ENCODE measurements at regions of chr17 and their contacts with region 1.

Region 1: DNA sequence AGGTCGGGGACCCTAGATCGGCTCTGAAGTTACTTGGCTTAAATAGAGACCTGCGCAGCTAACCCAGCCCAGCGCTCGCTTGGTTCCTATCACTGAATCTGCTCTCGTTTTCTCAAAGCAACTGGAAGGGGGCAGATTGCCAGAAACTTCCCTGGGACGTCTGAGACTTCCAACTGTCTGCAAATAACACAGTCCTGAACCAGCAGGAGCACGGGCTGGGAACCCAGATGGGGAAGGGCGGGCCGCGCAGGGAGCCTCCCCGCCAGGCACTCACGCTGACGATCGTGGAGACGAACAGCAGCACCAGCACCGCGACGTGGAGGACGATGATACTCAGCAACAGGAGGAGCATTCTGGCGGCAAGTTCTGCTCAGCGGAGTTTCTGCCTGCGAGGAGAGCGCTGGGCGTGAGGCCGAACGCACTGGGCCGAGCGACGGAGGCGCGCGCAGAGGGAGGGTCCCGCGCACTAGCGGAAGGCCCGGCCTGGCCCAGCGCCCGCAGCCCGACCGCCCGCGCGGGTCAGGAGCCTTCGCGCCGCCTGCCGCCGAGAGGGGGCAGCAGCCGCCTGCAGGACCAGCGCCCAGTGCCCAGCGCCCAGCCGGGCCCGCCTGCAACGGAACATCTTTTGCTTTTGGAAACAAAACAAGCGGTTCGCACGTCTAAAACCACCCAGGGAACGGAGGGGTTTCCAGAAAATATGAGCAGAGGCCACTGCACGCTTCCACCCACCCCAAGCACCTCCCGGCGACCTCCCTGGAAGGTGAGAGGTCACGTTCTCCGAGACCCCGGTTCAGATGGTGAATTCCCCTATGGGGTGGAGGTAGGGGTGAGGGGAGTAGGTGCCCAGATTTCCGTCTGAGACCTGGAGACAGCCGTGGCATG is 4.5 kb downstream of the PMP22 start:
- DNase-seq: peak; percentile 91 to 93
- H3K4me3 ChIP-seq: peak overlapping the region; percentile 86 to 89
- H3K27ac ChIP-seq: peak overlapping the region; percentile 98 to 99
- H3K4me1 ChIP-seq: peaks cover 19 to 21% of the 10 kb centered on the region in 2 donors
- H3K27me3 ChIP-seq: no peaks in the 10 kb centered on the region
- CTCF ChIP-seq: peak; percentile 64 to 98 (median 91)
- POLR2A ChIP-seq: peak; percentile 6 to 47

Region 2: GRCh38 chr17:15194859-15195277 is 65.7 kb before region 1 on chr17:
- intact Hi-C with region 1: no loop called
- DNase-seq: no peak
- H3K4me3 ChIP-seq: no peak overlapping the region
- H3K27ac ChIP-seq: no peak overlapping the region
- H3K4me1 ChIP-seq: no peaks in the 10 kb centered on the region
- H3K27me3 ChIP-seq: no peaks in the 10 kb centered on the region
- CTCF ChIP-seq: no peak
- POLR2A ChIP-seq: no peak

Region 3: DNA sequence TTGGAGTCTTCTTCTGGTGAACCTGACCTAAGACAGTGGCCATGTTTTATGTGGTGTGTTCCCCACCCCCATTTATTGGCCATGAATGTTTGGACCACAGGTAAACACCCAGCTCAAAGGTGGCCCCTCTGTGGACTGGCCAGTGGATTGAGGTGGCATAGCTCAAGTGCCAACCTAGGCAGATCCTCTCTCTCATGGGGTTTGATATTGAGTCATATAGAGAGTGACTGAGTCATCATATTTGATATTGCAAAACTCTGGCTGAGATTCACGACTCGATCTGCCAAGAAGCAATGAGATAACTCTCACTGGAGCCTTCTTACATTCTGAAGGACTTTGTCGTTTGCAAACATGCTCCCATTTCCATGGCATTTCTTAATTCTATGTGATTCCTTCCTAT is 91.3 kb after region 1 on chr17:
- intact Hi-C with region 1: loop called (anchors 5 kb)
- DNase-seq: peak; percentile 45 to 73
- H3K4me3 ChIP-seq: no peak overlapping the region
- H3K27ac ChIP-seq: peak overlapping the region; percentile 79 to 83
- H3K4me1 ChIP-seq: no peaks in the 10 kb centered on the region
- H3K27me3 ChIP-seq: no peaks in the 10 kb centered on the region
- CTCF ChIP-seq: no peak
- POLR2A ChIP-seq: no peak

Region 4: GRCh38 chr17:15456972-15457722 is 196.5 kb after region 1 on chr17:
- intact Hi-C with region 1: loop called (anchors 5 kb)
- DNase-seq: peak; percentile 70 to 77
- H3K4me3 ChIP-seq: no peak overlapping the region
- H3K27ac ChIP-seq: peak overlapping the region; percentile 81
- H3K4me1 ChIP-seq: peaks cover 0 to 8% of the 10 kb centered on the region in 2 donors
- H3K27me3 ChIP-seq: no peaks in the 10 kb centered on the region
- CTCF ChIP-seq: peak; percentile 46 to 69 (median 56)
- POLR2A ChIP-seq: no peak

Region 5: GRCh38 chr17:15502369-15503112 is 241.9 kb after region 1 on chr17:
- intact Hi-C with region 1: loop called (anchors 2 kb)
- DNase-seq: peak; percentile 94 to 95
- H3K4me3 ChIP-seq: peak overlapping the region; percentile 16 to 22
- H3K27ac ChIP-seq: peak overlapping the region; percentile 82 to 87
- H3K4me1 ChIP-seq: no peaks in the 10 kb centered on the region
- H3K27me3 ChIP-seq: no peaks in the 10 kb centered on the region
- CTCF ChIP-seq: peak; percentile 87 to 93 (median 92)
- POLR2A ChIP-seq: peak in 1 of 2 donors; percentile 20